Mammary epithelial cell (primary cell): ENCODE measurements at regions of chr7 and their contacts with region 1.

Region 1: GRCh38 chr7:2638224-2638991 is 6.6 kb downstream of the TTYH3 start:
- DNase-seq: no peak
- H3K4me3 ChIP-seq: no peak overlapping the region
- H3K27ac ChIP-seq: no peak overlapping the region
- H3K4me1 ChIP-seq: peaks cover 31% of the 10 kb centered on the region
- H3K27me3 ChIP-seq: no peaks in the 10 kb centered on the region
- CTCF ChIP-seq: no peak

Region 2: GRCh38 chr7:2698581-2699288 is 60.3 kb after region 1 on chr7:
- CTCF ChIA-PET with region 1: no interaction called
- dilution Hi-C with region 1: loop called (anchors 5 kb)
- in situ Hi-C with region 1: no loop called
- intact Hi-C with region 1: no loop called
- DNase-seq: no peak
- H3K4me3 ChIP-seq: no peak overlapping the region
- H3K27ac ChIP-seq: no peak overlapping the region
- H3K4me1 ChIP-seq: no peaks in the 10 kb centered on the region
- H3K27me3 ChIP-seq: no peaks in the 10 kb centered on the region
- CTCF ChIP-seq: no peak

Region 3: DNA sequence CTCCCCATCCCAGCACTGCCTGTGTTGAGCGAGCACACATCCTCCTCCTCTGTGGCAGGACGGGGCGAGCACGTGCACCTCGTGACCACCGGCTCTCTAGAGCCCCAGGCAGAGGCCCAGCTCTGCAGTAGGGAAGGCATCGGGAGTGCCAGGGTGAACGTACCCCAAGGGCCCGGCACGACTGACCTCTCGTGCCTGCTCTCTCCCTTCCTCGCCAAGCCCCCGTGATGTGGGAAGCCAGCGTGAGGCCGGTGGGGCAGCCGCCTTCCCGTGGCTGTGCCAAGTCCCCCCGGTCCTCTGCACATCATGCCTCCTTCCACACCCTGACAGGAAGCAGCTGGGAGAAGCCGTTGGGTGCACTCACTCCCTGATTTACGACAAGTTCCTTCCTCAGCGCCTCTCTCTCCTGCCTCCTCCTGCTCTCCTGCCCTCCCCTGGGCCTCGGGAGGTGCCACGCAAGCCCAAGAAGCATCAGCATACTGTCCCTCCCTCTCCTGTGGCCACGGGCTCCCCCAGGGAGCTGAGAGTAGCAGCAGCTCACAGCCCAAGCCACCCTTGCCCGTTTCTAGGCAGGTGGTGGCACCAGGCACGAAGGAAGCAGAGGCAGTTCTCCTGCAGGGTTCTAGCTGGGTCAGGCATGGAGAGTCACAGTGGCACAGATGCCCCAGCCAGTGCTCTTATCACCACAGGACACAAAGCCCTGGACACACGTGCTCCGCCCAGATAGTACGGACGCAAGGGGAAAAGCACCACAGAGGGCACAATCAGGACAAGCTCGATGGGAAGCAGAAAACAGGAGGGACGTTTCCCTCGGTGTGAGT is 96.6 kb after region 1 on chr7:
- CTCF ChIA-PET with region 1: no interaction called
- dilution Hi-C with region 1: no loop called
- in situ Hi-C with region 1: no loop called
- intact Hi-C with region 1: no loop called
- DNase-seq: no peak
- H3K4me3 ChIP-seq: no peak overlapping the region
- H3K27ac ChIP-seq: no peak overlapping the region
- H3K4me1 ChIP-seq: no peaks in the 10 kb centered on the region
- H3K27me3 ChIP-seq: no peaks in the 10 kb centered on the region
- CTCF ChIP-seq: no peak